Naive thymus-derived CD4-positive, alpha-beta T cell (primary cell): ENCODE measurements at regions of chr14 and their contacts with region 1.

Region 1: GRCh38 chr14:96424109-96424989 is 32.4 kb downstream of the AK7 start:
- DNase-seq: peak in 8 of 9 donors; percentile 17 to 58 (median 50)
- ATAC-seq: peak; percentile 88
- H3K4me3 ChIP-seq: peak overlapping the region; percentile 49
- H3K4me3 Mint-ChIP-seq: peak overlapping the region; percentile 60 to 84 (median 82)
- H3K27ac ChIP-seq: no peak overlapping the region
- H3K27ac Mint-ChIP-seq: peak overlapping the region in 1 of 9 donors; percentile 41
- H3K4me1 ChIP-seq: no peaks in the 10 kb centered on the region
- H3K4me1 Mint-ChIP-seq: peaks cover 0 to 5% (median 3%) of the 10 kb centered on the region in 7 donors
- H3K27me3 ChIP-seq: no peaks in the 10 kb centered on the region
- H3K27me3 Mint-ChIP-seq: peaks cover 0 to 10% (median 3%) of the 10 kb centered on the region in 5 donors

Region 2: DNA sequence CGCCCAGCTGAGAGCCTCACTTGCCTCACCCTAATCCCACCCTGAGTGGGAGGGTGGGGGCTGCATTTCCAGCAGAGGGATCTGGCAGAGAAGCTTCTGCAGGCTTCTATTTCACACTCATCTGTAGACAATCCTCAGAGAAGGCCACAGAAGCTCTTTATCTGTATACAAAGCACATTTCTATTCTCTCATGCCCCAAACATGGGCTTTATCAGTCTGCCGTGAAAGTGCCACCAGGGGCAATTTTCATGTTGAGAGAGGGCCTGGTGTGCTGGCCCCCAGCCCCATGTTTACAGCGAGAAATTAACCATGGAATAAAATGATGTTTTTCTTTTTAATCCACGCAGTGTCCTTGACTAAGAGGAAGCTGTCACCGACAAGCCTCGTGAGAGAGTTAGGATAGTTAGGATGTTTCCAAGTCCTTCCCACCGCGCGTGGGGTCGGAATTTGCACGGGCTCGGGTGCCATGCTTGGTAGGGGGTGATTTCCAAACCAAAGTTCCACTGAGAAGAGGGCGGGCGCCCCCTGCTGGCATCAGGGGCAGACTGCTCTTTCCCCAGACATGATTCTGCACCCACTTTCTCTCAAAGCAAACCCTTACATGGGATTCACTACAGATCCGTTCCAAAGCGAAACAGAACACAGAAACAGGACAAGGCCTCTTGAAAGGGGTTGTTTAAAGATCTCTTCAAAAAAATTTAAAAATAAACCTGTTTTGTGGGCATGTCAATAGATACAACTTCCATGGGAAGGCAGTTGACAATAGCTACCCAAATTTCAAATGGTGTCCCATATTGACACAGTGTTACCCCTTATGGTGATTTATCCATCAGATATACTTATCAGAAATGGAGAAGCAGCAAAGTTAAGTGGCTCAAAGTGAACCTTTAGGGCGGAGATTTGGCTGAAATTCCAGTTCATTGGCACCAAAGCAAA is 148.9 kb before region 1 on chr14:
- CTCF ChIA-PET with region 1: no interaction called
- POLR2A ChIA-PET with region 1: no interaction called
- intact Hi-C with region 1: loop called in 1 of 2 experiments (anchors 1 kb)
- DNase-seq: peak; percentile 41 to 73 (median 67)
- ATAC-seq: peak; percentile 66
- H3K4me3 ChIP-seq: no peak overlapping the region
- H3K4me3 Mint-ChIP-seq: no peak overlapping the region
- H3K27ac ChIP-seq: no peak overlapping the region
- H3K27ac Mint-ChIP-seq: peak overlapping the region in 1 of 9 donors; percentile 9
- H3K4me1 ChIP-seq: peaks cover 0 to 2% of the 10 kb centered on the region in 2 donors
- H3K4me1 Mint-ChIP-seq: peaks cover 0 to 5% (median 0%) of the 10 kb centered on the region in 7 donors
- H3K27me3 ChIP-seq: no peaks in the 10 kb centered on the region
- H3K27me3 Mint-ChIP-seq: no peaks in the 10 kb centered on the region

Region 3: GRCh38 chr14:96297000-96297399 is 127.3 kb before region 1 on chr14:
- CTCF ChIA-PET with region 1: interaction called, 15 read pairs
- POLR2A ChIA-PET with region 1: no interaction called
- intact Hi-C with region 1: loop called (anchors 1 kb)
- DNase-seq: peak in 6 of 9 donors; percentile 7 to 45 (median 33)
- ATAC-seq: no peak
- H3K4me3 ChIP-seq: no peak overlapping the region
- H3K4me3 Mint-ChIP-seq: no peak overlapping the region
- H3K27ac ChIP-seq: no peak overlapping the region
- H3K27ac Mint-ChIP-seq: no peak overlapping the region
- H3K4me1 ChIP-seq: no peaks in the 10 kb centered on the region
- H3K4me1 Mint-ChIP-seq: no peaks in the 10 kb centered on the region
- H3K27me3 ChIP-seq: no peaks in the 10 kb centered on the region
- H3K27me3 Mint-ChIP-seq: no peaks in the 10 kb centered on the region

Region 4: GRCh38 chr14:96349286-96350075 is 74.9 kb before region 1 on chr14:
- CTCF ChIA-PET with region 1: interaction called, 3 read pairs
- POLR2A ChIA-PET with region 1: no interaction called
- intact Hi-C with region 1: loop called in 1 of 2 experiments (anchors 5 kb)
- DNase-seq: no peak
- ATAC-seq: no peak
- H3K4me3 ChIP-seq: no peak overlapping the region
- H3K4me3 Mint-ChIP-seq: peak overlapping the region in 1 of 10 donors; percentile 4
- H3K27ac ChIP-seq: no peak overlapping the region
- H3K27ac Mint-ChIP-seq: peak overlapping the region in 2 of 9 donors; percentile 2 to 5
- H3K4me1 ChIP-seq: no peaks in the 10 kb centered on the region
- H3K4me1 Mint-ChIP-seq: peaks cover 4 to 44% (median 33%) of the 10 kb centered on the region in 7 donors
- H3K27me3 ChIP-seq: no peaks in the 10 kb centered on the region
- H3K27me3 Mint-ChIP-seq: no peaks in the 10 kb centered on the region

Region 5: DNA sequence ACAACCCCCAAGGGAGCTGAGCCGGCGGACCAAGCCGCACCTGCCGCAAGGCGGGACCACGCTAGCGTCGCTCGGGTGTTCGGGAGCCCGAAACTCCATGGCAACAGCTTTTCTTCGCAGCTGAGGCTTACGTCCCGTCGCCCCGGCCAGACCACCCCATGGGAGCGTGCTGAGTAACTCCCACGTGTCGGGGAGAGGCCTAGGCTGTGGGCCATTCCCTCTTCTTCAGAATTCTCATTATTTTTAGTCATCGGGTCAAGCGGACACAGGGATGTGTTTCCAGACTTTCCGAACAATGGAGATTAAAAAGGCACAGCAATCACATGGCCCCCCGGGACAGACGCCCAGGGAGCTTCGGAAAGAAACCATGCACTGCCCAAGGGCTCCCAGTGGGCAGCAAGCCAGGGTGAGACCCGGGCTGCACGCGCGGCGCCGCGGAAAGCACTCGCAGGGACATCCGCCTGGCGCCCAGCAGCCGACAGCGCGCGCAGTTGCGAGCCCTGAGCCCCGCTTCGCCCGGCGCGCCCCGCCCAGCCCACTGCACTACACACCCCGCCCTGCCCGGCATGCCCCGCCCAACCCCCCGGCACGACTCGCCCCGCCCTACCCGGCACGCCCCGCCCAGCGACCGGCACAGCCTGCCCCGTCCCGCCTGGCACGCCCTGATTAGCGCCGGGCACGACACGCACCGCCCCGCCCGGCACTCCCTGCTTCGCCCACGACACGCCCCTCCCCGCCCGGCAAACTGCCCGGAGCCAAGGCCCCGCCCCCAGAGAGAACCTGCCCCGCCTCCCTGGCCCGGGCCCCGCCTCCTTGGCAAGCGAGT is 32.8 kb before region 1 on chr14:
- CTCF ChIA-PET with region 1: no interaction called
- POLR2A ChIA-PET with region 1: no interaction called
- intact Hi-C with region 1: loop called in 1 of 2 experiments (anchors 1 kb)
- DNase-seq: peak; percentile 97 to 100 (median 99)
- ATAC-seq: peak; percentile 97
- H3K4me3 ChIP-seq: peak overlapping the region; percentile 90
- H3K4me3 Mint-ChIP-seq: peak overlapping the region; percentile 85 to 94 (median 92)
- H3K27ac ChIP-seq: peak overlapping the region; percentile 55
- H3K27ac Mint-ChIP-seq: peak overlapping the region in 8 of 9 donors; percentile 61 to 93 (median 86)
- H3K4me1 ChIP-seq: peaks cover 7 to 11% of the 10 kb centered on the region in 2 donors
- H3K4me1 Mint-ChIP-seq: peaks cover 0 to 7% (median 0%) of the 10 kb centered on the region in 7 donors
- H3K27me3 ChIP-seq: no peaks in the 10 kb centered on the region
- H3K27me3 Mint-ChIP-seq: peaks cover 0 to 14% (median 0%) of the 10 kb centered on the region in 5 donors

Region 6: DNA sequence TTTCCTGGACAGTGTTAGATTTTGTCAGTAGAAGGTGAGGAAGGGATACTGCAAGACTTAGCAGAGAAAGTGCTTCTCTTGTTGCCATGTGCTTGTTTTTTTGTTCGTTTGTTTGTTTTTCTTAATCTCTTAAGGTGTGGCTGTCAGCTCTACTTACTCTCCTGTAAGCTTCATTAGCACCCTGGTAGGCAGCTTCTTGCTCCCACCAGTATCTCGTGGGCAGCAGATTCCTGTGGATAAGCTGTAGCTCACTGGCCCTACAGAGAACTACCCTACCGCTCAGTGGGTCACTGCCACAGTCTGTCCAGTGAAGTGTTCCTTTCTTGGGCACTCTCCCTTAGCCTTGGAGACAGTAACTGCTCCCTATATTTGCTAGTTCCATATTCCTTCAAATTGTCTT is 402.9 kb after region 1 on chr14:
- CTCF ChIA-PET with region 1: no interaction called
- POLR2A ChIA-PET with region 1: no interaction called
- intact Hi-C with region 1: no loop called
- DNase-seq: no peak
- ATAC-seq: no peak
- H3K4me3 ChIP-seq: no peak overlapping the region
- H3K4me3 Mint-ChIP-seq: no peak overlapping the region
- H3K27ac ChIP-seq: no peak overlapping the region
- H3K27ac Mint-ChIP-seq: no peak overlapping the region
- H3K4me1 ChIP-seq: no peaks in the 10 kb centered on the region
- H3K4me1 Mint-ChIP-seq: peaks cover 14 to 32% (median 26%) of the 10 kb centered on the region in 7 donors
- H3K27me3 ChIP-seq: no peaks in the 10 kb centered on the region
- H3K27me3 Mint-ChIP-seq: no peaks in the 10 kb centered on the region